Posterior cingulate gyrus (tissue), 11 donors: ENCODE measurements at regions of chr6 and their contacts with region 1.

Region 1: DNA sequence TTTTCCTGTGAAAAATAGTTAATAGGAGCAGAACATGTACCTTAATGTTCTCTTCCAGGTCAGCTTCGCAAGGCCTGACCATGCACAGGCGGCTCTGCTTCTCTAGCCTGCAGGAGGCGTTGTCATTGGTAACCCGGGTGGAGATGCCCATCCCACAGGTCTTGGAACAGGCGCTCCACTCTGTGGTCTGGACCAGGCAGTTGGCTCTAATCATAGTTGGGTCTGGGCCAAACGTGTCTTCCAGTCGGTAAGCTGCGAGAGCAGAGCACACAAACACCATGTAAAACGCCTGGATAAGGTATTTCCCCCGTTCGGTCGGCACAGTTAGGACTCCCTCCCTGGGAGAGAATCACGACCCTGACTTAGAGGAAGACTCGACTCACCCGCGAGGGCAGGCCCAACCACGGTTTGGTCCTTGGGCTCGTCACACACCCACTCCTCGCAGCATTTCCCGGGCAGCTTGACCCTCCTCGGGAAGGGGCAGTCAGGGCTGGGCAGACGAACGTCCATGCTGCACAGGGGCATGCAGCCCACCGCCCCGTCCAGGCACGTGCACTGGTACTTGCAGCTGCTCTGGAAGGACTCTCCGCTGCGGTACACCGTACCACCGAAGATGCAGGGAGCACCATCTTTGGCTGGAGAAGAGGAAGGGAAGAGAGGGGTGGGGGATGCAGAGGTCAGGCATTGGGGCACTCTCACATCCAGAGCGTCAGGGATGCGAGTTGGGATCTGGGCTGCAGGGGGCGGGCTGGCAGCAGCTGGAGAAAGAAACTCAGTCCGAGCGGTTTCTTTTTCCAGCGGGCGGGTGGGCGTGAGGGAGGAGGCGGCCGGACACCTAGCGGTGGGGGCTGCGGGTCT is 1.0 kb downstream of the CCN2 start:
- DNase-seq: peak; percentile 45 to 93 (median 60)

Region 2: DNA sequence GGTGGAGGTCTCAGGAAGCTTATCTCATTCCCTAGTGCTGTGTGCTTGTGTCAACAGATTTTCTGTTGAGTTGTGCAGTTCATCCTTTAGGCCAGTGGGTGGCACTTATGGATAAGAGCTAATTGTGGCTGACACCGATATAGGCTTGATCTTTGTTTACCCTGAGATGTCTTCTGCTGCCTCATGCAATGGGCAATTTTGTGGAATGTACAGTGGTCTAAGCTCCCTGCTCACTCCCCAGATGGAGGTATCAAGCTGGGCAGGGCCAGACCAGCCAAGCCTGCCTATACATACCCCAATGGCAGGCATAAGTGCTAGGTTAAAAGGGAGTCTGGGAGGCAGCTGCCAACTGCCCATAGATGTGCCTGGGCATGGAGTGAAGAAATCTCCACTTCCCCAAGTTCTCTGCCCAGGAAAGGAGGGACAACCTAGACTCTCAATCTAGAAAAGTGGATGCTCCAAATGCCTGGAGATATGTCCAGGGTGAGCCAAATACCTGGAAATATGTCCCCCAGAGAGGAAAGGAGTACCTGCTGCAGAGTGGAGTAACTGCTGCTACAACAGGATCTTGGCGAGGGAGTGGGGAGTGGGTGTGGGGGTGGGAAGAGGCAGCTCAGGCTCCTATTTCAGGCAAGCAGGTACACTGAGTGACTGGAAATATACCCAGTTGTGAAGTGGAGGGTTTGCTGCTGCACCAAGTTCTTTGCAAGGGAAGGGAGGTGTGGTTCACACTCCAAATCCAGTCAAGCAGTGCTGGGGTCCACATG is 430.3 kb before region 1 on chr6:
- intact Hi-C with region 1: no loop called
- DNase-seq: peak in 1 of 10 donors; percentile 33

Region 3: GRCh38 chr6:131894735-131895424 is 55.3 kb before region 1 on chr6:
- intact Hi-C with region 1: no loop called
- DNase-seq: no peak

Region 4: DNA sequence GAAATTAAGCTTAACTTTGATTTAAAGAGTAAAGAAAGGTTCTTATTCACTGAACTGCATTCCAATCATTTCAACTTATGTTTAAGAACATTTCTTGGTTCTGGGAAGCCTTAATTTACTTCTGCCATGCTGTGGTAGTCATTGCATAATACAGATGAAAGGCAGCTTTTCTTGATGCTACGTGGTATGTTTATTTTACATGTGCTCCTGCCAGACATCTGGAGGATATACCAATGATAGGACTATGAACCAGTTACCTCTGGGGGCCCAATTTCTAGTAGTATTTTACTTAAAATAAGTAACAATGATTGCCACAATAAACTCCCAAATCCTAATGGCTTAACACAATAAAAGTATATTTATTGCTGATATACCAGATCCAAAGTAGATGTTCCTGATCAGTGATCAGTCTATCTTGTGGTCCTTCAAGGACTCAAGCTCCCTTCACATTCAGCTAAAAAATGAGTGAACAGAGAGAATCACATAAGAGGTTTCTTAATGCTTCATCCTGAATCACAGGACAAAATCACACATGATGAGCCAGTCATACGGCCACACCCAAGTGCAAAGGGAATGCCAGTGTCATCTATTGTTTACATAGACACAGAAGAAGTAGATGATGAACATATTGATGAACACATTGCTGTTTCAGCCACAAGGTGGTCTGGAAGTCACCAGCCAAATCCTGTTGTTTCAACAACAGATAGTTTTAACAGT is 57.5 kb after region 1 on chr6:
- intact Hi-C with region 1: no loop called
- DNase-seq: no peak

Region 5: DNA sequence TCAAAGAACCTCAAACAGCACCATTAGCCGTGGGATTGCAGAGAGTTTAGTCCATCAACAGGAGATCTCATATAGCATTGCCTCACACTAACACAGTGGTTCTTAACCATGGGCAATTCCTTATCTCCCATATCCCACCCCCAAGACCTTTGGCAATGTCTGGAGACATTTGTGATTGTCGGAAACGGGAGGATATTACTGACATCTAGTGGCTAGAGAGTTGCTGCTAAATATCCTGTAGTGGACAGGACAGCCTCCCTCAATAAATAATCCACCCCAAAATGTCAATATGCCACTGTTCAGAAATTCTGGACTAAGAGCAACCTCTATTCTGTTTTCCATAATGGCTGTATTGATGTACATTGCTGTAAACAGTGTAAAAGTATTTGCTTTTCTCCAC is 211.1 kb after region 1 on chr6:
- intact Hi-C with region 1: loop called (anchors 5 kb)
- DNase-seq: no peak

Region 6: DNA sequence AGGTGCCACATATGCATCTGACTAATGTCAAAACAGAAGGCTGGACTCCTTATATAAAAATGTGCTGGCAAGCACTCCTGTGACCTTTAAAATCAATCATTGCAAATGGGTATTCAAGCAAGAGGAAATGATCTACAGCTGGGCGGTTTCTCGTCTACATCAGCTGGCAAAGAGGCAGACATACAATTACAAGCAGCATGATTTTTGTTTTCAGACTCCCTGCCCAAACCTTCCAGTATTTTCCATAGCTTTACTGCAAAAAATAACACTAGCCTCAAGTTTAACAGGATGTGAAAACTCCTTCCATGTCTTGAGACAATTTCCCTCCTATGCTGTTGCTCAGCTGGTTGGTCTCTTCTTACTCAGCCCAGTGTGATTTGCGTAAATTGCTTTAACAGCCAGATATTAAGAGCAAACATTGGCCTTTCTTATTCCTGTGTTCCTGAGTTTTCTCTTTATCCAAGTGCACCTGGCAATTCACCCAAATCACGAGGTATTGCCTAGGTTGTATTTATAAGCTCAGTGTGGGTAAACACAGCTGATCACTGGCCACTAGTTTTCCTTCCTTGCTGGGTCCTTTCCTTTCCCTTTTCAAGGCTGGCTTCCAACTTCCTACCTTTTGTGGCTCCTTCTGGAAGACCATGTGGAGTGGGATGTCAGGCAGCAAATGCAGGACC is 320.7 kb after region 1 on chr6:
- intact Hi-C with region 1: no loop called
- DNase-seq: no peak